Activated B cell treated with CpG ODN at 0.5 μM for 24 hours (primary cell): ENCODE measurements at regions of chr7 and their contacts with region 1.

Region 1: DNA sequence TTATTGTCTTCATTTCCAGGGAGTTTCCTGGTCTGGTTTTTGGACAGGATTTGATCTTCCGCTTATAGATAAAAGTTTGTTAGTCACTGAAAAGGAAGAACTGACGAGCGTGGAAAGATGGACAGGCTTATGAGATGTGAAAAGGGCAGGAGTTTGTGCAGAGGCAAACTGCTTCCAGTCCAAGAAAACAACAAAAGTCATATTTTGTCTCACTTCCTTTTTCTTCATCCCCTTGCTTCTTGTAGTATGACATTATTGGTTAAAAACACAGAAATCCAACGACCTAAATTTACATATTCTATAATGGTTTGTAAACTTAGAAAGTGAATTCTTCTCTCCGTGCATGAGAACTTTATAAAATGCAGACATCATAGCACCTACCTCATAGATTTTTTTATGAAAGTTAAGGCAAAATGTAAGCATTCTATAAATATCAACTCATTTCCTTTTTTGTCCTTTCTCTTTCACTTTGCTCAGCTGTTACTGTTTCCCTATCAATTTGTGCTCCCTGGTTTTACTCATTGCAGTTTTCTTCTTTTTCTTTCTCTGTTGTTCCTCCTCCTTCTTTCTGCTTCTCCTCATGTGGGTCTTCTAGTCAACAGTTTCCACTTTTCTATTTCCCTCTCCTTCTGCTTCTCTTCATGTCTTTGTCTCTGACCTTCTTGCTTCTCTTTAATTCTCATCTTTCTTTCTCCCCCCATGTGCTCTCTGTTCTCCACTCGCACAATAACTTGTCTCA is 370.2 kb downstream of the ARL4A start:
- DNase-seq: no peak
- ATAC-seq: peak; percentile 84
- H3K4me3 Mint-ChIP-seq: peak overlapping the region; percentile 82
- H3K27ac Mint-ChIP-seq: peak overlapping the region; percentile 94
- H3K4me1 Mint-ChIP-seq: peaks cover 44% of the 10 kb centered on the region
- H3K27me3 Mint-ChIP-seq: no peaks in the 10 kb centered on the region
- CTCF ChIP-seq: no peak

Region 2: DNA sequence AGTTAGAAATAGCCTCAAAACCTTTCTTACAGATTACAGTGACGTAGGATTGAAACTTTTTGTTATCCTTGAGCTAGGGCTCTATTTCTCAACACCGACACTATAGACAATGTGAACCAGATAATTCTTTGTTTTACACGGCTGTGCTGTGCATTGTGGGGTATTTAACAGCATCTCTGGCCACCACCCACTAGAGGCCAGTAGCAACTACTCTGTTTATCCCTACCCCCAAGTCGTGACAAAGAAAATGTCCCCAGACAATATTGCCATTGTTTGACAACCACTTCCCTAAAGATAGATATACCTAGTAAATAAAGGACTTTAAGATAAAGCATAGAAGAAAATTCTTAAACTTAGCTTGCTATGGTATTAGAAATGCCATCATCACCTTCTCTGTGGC is 10.6 kb before region 1 on chr7:
- CTCF ChIA-PET with region 1: no interaction called
- POLR2A ChIA-PET with region 1: no interaction called
- intact Hi-C with region 1: loop called (anchors 1 kb)
- DNase-seq: no peak
- ATAC-seq: peak; percentile 28
- H3K4me3 Mint-ChIP-seq: no peak overlapping the region
- H3K27ac Mint-ChIP-seq: no peak overlapping the region
- H3K4me1 Mint-ChIP-seq: no peaks in the 10 kb centered on the region
- H3K27me3 Mint-ChIP-seq: peaks cover 2% of the 10 kb centered on the region
- CTCF ChIP-seq: no peak

Region 3: DNA sequence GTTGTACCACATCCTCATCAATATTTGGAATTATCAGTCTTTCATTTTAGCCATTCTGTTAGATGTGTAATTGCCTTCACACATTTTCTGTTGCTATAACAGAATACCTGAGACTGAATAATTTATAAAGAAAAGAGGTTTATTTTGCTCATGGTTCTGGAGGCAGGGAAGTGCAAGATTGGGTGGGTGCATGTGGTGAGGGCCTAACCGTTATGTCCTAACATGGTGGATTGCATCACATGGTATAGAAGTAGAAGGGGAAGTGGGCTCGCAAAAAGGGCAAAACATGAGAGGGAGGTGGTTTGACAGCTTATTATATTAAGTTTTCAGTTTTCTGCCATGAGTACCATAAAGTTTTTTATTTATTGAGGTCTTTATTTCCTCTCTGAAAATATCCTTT is 81.8 kb after region 1 on chr7:
- CTCF ChIA-PET with region 1: no interaction called
- POLR2A ChIA-PET with region 1: no interaction called
- intact Hi-C with region 1: no loop called
- DNase-seq: no peak
- ATAC-seq: no peak
- H3K4me3 Mint-ChIP-seq: no peak overlapping the region
- H3K27ac Mint-ChIP-seq: no peak overlapping the region
- H3K4me1 Mint-ChIP-seq: no peaks in the 10 kb centered on the region
- H3K27me3 Mint-ChIP-seq: no peaks in the 10 kb centered on the region
- CTCF ChIP-seq: no peak